ENCODE measurements at regions of chr12 and their contacts with region 1.

Region 1: GRCh38 chr12:116599285-116600136 is 40.3 kb downstream of the MAP1LC3B2 start:
- DNase-seq: peak; percentile 20 to 81 (median 62)
- ATAC-seq: peak; percentile 75
- H3K4me3 ChIP-seq: no peak overlapping the region
- H3K4me3 Mint-ChIP-seq: no peak overlapping the region
- H3K27ac ChIP-seq: no peak overlapping the region
- H3K27ac Mint-ChIP-seq: no peak overlapping the region
- H3K4me1 ChIP-seq: peaks cover 13% of the 10 kb centered on the region
- H3K4me1 Mint-ChIP-seq: peaks cover 20% of the 10 kb centered on the region
- H3K27me3 ChIP-seq: peaks cover 0 to 3% of the 10 kb centered on the region in 2 experiments
- H3K27me3 Mint-ChIP-seq: no peaks in the 10 kb centered on the region
- CTCF ChIP-seq: peak; percentile 47

Region 2: DNA sequence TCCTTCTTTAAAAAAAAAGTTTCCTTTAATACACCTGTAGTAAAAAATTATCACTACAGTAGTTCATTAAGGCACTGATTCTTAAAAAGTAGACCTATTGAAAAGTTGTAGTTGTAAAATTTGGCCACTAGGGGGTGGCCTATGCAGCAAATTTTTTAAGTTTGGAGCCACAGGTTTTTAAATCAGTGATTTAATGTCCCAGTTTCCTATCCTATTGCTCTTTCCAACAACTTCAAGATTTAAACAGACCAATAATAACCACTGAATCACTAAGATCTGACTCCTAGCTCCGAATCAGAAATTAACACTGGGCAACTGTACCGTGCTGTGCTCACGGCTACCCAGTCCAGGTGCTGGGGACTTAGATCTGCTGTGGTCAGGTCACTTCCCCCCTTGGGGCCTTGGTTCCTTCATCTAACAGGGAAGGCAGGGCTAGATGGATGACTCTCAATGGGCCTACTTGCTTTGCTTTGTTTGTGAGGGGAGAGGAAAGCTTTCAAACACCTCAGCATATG is 601.3 kb before region 1 on chr12:
- CTCF ChIA-PET with region 1: interaction called, 18 read pairs
- POLR2A ChIA-PET with region 1: no interaction called
- intact Hi-C with region 1: loop called (anchors 2 to 5 kb)
- DNase-seq: peak in 3 of 9 experiments; percentile 20 to 63 (median 55)
- ATAC-seq: peak; percentile 58
- H3K4me3 ChIP-seq: no peak overlapping the region
- H3K4me3 Mint-ChIP-seq: no peak overlapping the region
- H3K27ac ChIP-seq: no peak overlapping the region
- H3K27ac Mint-ChIP-seq: peak overlapping the region; percentile 75
- H3K4me1 ChIP-seq: no peaks in the 10 kb centered on the region
- H3K4me1 Mint-ChIP-seq: peaks cover 14% of the 10 kb centered on the region
- H3K27me3 ChIP-seq: no peaks in the 10 kb centered on the region
- H3K27me3 Mint-ChIP-seq: no peaks in the 10 kb centered on the region
- CTCF ChIP-seq: peak; percentile 97

Region 3: GRCh38 chr12:116066381-116067230 is 532.9 kb before region 1 on chr12:
- CTCF ChIA-PET with region 1: interaction called, 5 read pairs
- POLR2A ChIA-PET with region 1: no interaction called
- intact Hi-C with region 1: loop called (anchors 5 kb)
- DNase-seq: peak; percentile 8 to 78 (median 59)
- ATAC-seq: peak; percentile 88
- H3K4me3 ChIP-seq: no peak overlapping the region
- H3K4me3 Mint-ChIP-seq: no peak overlapping the region
- H3K27ac ChIP-seq: no peak overlapping the region
- H3K27ac Mint-ChIP-seq: no peak overlapping the region
- H3K4me1 ChIP-seq: no peaks in the 10 kb centered on the region
- H3K4me1 Mint-ChIP-seq: peaks cover 26% of the 10 kb centered on the region
- H3K27me3 ChIP-seq: no peaks in the 10 kb centered on the region
- H3K27me3 Mint-ChIP-seq: no peaks in the 10 kb centered on the region
- CTCF ChIP-seq: peak; percentile 83

Region 4: GRCh38 chr12:116142936-116143898 is 456.3 kb before region 1 on chr12:
- CTCF ChIA-PET with region 1: interaction called, 11 read pairs
- POLR2A ChIA-PET with region 1: no interaction called
- intact Hi-C with region 1: loop called (anchors 1 to 2 kb)
- DNase-seq: peak in 1 of 9 experiments; percentile 29
- ATAC-seq: peak; percentile 34
- H3K4me3 ChIP-seq: no peak overlapping the region
- H3K4me3 Mint-ChIP-seq: peak overlapping the region; percentile 22
- H3K27ac ChIP-seq: no peak overlapping the region
- H3K27ac Mint-ChIP-seq: peak overlapping the region; percentile 74
- H3K4me1 ChIP-seq: peaks cover 9% of the 10 kb centered on the region
- H3K4me1 Mint-ChIP-seq: peaks cover 56% of the 10 kb centered on the region
- H3K27me3 ChIP-seq: no peaks in the 10 kb centered on the region
- H3K27me3 Mint-ChIP-seq: no peaks in the 10 kb centered on the region
- CTCF ChIP-seq: no peak